Lower lobe of right lung (tissue), 2 donors: ENCODE measurements at regions of chr11 and their contacts with region 1.

Region 1: GRCh38 chr11:114262681-114263512 is 33.3 kb upstream of the NNMT start:
- DNase-seq: no peak
- ATAC-seq: peak; percentile 16 to 66
- H3K4me3 ChIP-seq: no peak overlapping the region
- H3K27ac ChIP-seq: no peak overlapping the region
- H3K4me1 ChIP-seq: peaks cover 43% of the 10 kb centered on the region
- H3K27me3 ChIP-seq: no peaks in the 10 kb centered on the region
- CTCF ChIP-seq: peak; percentile 57

Region 2: GRCh38 chr11:113896156-113896879 is 366.6 kb before region 1 on chr11:
- intact Hi-C with region 1: loop called (anchors 10 kb)
- DNase-seq: no peak
- ATAC-seq: peak; percentile 77 to 85
- H3K4me3 ChIP-seq: no peak overlapping the region
- H3K27ac ChIP-seq: no peak overlapping the region
- H3K4me1 ChIP-seq: no peaks in the 10 kb centered on the region
- H3K27me3 ChIP-seq: no peaks in the 10 kb centered on the region
- CTCF ChIP-seq: peak; percentile 80

Region 3: DNA sequence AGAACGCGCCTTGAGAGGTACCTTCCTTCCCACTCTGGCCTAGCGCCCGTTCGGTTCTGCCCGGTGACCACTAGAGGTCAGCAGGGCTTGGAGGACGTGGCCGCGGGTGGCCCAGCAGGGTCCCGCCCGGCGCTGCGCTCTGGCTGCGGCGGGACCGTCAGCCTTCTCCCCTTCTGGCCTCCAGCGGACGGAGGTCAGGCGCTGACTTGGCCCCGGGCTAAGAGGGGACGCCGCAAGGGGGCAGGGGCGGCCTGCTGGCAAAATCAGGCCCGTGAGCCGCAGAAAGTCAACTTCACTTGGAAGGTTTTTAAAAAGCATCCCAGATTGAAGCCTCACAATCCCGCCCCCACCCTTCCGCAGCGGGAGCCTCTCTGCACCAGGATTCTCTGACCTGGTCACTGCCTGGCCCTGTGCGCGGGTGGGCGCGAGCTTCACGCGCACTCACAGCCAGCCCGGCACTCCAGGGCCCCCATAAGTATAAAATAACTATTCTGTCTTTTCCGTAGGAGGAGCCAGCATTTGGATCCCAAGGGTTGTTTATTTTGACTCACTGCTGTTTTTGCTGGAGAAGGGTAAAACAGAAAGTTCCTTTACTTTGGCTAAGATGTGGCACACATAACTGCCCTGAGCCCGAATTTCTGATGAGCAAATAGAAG is 226.6 kb before region 1 on chr11:
- intact Hi-C with region 1: loop called (anchors 10 kb)
- DNase-seq: peak; percentile 91
- ATAC-seq: peak; percentile 97 to 98
- H3K4me3 ChIP-seq: peak overlapping the region; percentile 49
- H3K27ac ChIP-seq: peak overlapping the region; percentile 67
- H3K4me1 ChIP-seq: peaks cover 22% of the 10 kb centered on the region
- H3K27me3 ChIP-seq: no peaks in the 10 kb centered on the region
- CTCF ChIP-seq: peak; percentile 94

Region 4: GRCh38 chr11:114297806-114298700 is 35.2 kb after region 1 on chr11:
- intact Hi-C with region 1: no loop called
- DNase-seq: no peak
- ATAC-seq: no peak
- H3K4me3 ChIP-seq: peak overlapping the region; percentile 53
- H3K27ac ChIP-seq: peak overlapping the region; percentile 88
- H3K4me1 ChIP-seq: peaks cover 23% of the 10 kb centered on the region
- H3K27me3 ChIP-seq: no peaks in the 10 kb centered on the region
- CTCF ChIP-seq: no peak